ENCODE measurements at regions of chr3 and their contacts with region 1.

Region 1: DNA sequence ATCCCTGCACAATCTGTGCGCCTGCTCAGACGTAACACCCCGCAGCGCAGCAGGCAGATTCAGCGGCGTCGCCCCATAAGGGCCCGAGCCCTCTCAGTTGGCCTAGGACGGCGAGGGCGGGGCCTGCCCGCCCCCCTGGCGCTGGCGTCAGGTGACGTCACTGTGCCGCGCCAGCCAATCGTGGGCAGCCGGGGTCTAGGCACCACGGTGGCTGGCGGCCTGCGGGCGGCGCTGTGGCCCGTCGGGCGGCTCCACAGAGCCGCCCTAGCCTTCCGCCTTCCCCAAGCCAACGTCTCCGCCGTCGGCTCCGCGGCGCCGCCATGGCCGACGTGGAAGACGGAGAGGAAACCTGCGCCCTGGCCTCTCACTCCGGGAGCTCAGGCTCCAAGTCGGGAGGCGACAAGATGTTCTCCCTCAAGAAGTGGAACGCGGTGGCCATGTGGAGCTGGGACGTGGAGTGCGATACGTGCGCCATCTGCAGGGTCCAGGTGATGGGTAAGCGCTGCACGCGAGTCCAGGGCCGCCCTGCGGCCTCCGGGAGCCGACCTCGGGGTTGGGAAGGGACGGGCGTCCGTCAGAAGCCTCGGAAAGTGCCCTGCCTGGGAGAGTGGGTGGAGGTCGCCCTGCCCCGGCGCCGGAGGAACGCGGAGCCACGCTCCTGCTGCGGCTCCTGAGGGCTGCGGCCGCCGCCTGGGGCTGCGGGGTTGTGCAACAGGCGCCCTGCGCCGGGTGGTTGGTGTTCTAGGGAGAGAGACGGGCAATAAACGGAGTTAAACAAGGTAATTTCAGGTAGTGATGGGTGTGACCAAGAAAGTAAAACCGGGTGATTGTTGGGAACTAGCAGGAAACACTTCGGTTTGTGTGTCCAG is at the start of gene RNF7:
- DNase-seq: peak; percentile 84 to 94
- ATAC-seq: peak; percentile 90 to 93
- H3K4me3 ChIP-seq: peak within 1 kb of the TSS; percentile 87 to 97 (median 92)
- H3K27ac ChIP-seq: peak within 1 kb of the TSS; percentile 90 to 96 (median 92)
- H3K4me1 ChIP-seq: peaks cover 36 to 37% of the 10 kb centered on the region in 2 donors
- H3K27me3 ChIP-seq: no peaks in the 10 kb centered on the region
- CTCF ChIP-seq: peak; percentile 80 to 96 (median 95)
- POLR2A ChIP-seq: peak; percentile 78 to 79
- total RNA-seq, gene RNF7: 92.1 to 113 (median 106) TPM

Region 2: GRCh38 chr3:141311496-141312353 is 426.5 kb before region 1 on chr3:
- in situ Hi-C with region 1: no loop called
- intact Hi-C with region 1: loop called (anchors 5 kb)
- DNase-seq: peak; percentile 96 to 97
- ATAC-seq: peak; percentile 99 to 100
- H3K4me3 ChIP-seq: peak overlapping the region; percentile 65 to 80 (median 70)
- H3K27ac ChIP-seq: peak overlapping the region; percentile 81 to 83 (median 82)
- H3K4me1 ChIP-seq: peaks cover 4 to 10% of the 10 kb centered on the region in 2 donors
- H3K27me3 ChIP-seq: no peaks in the 10 kb centered on the region
- CTCF ChIP-seq: peak; percentile 59 to 81 (median 75)
- POLR2A ChIP-seq: peak; percentile 38 to 39

Region 3: GRCh38 chr3:141487521-141488252 is 250.6 kb before region 1 on chr3:
- in situ Hi-C with region 1: no loop called
- intact Hi-C with region 1: loop called (anchors 2 kb)
- DNase-seq: peak; percentile 59 to 69
- ATAC-seq: peak; percentile 71 to 75
- H3K4me3 ChIP-seq: peak overlapping the region; percentile 60 to 92 (median 78)
- H3K27ac ChIP-seq: peak overlapping the region; percentile 84 to 91 (median 86)
- H3K4me1 ChIP-seq: peaks cover 7 to 14% of the 10 kb centered on the region in 2 donors
- H3K27me3 ChIP-seq: no peaks in the 10 kb centered on the region
- CTCF ChIP-seq: peak in 1 of 5 experiments; percentile 22
- POLR2A ChIP-seq: peak; percentile 29 to 60

Region 4: DNA sequence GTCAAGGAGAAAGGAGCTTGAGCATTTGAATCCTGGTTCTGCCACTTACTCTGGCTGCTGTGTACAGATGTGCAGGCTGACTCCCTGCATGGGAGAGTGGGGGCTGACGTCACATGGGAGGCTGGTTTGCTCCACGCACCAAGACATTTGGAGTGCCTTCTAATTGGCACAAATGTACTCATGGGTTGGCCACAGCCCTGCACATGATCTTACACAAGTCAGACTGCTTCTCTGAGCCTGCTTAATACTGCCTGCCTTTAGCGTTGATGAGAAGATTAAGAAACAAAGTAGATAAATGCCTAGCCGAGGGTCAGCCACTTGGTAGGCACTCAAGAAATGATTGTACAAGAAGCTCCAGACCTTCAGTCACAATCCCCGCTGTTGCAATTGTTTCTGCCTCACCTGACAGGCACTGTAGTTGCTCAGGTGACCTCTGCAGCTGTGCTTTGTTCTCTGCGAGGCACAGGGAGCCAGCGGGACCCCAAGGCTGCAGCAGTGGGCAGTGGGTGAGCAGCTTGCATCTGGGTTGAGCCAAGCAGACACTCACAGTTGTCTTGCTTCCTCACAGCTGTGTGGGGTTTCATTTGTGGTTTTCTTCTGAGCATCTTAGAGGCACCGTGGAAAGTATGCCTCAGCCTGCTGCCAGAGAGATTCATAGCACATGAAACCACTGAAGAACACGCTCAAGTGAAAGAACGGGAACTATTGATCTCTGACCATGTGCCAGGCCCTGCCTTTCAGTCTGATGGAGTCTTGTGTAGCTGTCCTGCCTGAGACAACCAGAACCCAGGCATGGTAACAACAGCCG is 58.0 kb after region 1 on chr3:
- in situ Hi-C with region 1: no loop called
- intact Hi-C with region 1: loop called (anchors 5 kb)
- DNase-seq: peak; percentile 19 to 32
- ATAC-seq: peak; percentile 37 to 44
- H3K4me3 ChIP-seq: peak overlapping the region in 2 of 4 donors; percentile 48 to 68
- H3K27ac ChIP-seq: peak overlapping the region in 3 of 4 donors; percentile 11 to 69 (median 61)
- H3K4me1 ChIP-seq: peaks cover 7 to 15% of the 10 kb centered on the region in 2 donors
- H3K27me3 ChIP-seq: no peaks in the 10 kb centered on the region
- CTCF ChIP-seq: no peak
- POLR2A ChIP-seq: no peak

Region 5: DNA sequence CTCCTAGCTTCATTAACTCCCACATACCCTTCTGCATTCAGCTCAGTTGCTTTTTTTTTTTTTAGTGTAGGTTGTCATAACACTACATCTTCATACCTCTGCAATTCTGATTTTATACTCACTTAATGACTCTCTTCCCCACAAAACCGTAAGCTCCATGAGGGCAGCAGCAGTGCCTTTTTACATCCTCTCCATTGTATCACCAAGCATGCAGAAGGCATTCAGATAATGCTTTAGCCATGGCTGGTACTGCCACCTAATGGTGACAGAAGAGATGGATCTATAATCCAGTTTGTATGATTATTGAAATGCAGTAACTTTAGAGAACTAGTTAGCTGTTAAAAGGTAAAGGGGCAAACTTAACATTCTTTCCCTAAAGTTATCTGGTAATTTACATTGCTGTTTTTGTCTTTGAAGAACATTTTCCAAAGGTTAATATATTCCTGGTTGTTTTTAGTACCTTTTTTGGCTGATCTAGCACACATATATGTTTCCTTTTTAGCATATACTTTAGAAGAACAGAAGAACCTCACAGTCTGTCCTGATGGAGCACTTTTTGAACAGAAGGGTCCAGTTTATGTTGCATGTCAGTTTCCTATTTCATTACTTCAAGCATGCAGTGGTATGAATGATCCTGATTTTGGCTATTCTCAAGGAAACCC is 175.0 kb after region 1 on chr3:
- in situ Hi-C with region 1: no loop called
- intact Hi-C with region 1: loop called (anchors 1 kb)
- DNase-seq: no peak
- ATAC-seq: peak; percentile 66 to 72
- H3K4me3 ChIP-seq: no peak overlapping the region
- H3K27ac ChIP-seq: no peak overlapping the region
- H3K4me1 ChIP-seq: no peaks in the 10 kb centered on the region
- H3K27me3 ChIP-seq: no peaks in the 10 kb centered on the region
- CTCF ChIP-seq: peak; percentile 22 to 70 (median 61)
- POLR2A ChIP-seq: no peak

Region 6: DNA sequence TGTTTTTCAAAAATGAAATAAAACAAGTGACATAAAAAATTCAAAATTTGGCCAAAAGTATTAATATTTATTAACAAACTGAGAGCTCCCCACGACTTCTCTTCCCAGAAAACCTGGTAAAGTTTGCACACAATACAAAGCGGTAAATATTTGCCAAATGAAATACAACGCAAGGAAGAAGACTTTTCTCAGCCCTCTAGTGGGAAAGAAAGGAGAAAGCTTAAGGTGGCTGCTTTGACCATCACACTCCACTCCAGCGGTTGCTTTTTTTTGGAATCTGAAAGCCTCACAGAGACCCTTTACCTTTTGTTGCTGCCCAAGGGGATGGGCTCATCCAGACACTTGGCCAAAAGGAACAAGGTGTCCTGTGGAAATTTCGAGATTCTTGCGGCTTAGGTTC is 488.2 kb after region 1 on chr3:
- in situ Hi-C with region 1: no loop called
- intact Hi-C with region 1: loop called (anchors 10 kb)
- DNase-seq: no peak
- ATAC-seq: no peak
- H3K4me3 ChIP-seq: no peak overlapping the region
- H3K27ac ChIP-seq: no peak overlapping the region
- H3K4me1 ChIP-seq: peaks cover 9 to 13% of the 10 kb centered on the region in 2 donors
- H3K27me3 ChIP-seq: no peaks in the 10 kb centered on the region
- CTCF ChIP-seq: no peak
- POLR2A ChIP-seq: no peak

Measured in gastrocnemius medialis (tissue), 4 donors.